Right ventricle myocardium inferior (tissue), 1 donor: ENCODE measurements at regions of chr19 and their contacts with region 1.

Region 1: GRCh38 chr19:16247353-16248182 is 49.9 kb downstream of the AP1M1 start:
- DNase-seq: peak; percentile 94
- ATAC-seq: peak; percentile 97

Region 2: DNA sequence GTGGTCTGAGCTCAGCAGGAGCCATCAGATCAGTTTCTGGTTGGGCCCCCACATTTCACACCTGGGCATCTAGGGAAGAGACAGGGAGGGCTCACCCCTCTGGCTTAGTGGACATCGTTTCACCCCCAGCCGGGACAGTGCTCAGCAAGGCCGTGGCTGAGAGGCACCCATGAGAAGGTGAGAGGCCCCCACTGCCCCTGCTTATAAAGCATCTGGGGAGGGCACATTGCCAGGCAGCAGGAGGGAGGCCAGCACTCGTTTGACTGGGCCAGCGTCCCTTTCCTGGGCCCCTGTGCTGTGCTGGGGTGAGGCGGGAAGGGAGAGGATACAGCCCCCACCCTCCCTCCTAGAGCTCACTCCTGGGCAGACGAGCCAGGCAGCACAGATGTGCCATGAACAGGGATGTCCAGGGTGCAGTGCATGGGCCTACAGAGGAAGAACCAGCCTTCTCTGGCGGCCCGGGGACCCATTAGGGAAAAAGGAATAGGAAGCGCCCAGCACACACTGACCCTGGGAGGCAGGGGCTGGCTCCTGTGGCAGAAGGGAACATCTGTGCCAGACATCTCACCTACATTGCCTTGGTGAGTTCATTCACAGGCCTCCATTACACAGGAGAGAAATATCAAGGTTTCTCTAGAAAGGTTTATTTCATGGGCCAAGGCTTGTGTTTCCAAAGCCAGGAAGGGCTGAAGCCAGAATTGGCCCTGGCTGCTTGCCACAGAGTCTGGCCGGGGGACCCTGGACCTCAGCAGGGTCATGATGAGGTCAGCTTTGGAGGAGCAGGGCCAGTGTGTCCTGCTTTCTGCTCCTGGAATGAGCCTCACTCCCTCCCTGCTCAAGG is 42.1 kb before region 1 on chr19:
- intact Hi-C with region 1: no loop called
- DNase-seq: no peak
- ATAC-seq: peak; percentile 38

Region 3: GRCh38 chr19:16417660-16418596 is 170.4 kb after region 1 on chr19:
- intact Hi-C with region 1: loop called (anchors 10 kb)
- DNase-seq: peak; percentile 86
- ATAC-seq: peak; percentile 76